Left lung (tissue), 14 donors: ENCODE measurements at regions of chr4 and their contacts with region 1.

Region 1: GRCh38 chr4:2934813-2935761 is 28.1 kb downstream of the NOP14 start:
- DNase-seq: peak; percentile 91 to 98 (median 96)
- ATAC-seq: peak; percentile 60
- H3K4me3 ChIP-seq: peak overlapping the region; percentile 70 to 97
- H3K27ac ChIP-seq: peak overlapping the region; percentile 88 to 90
- H3K4me1 ChIP-seq: peaks cover 30 to 70% of the 10 kb centered on the region in 2 donors
- H3K27me3 ChIP-seq: no peaks in the 10 kb centered on the region
- CTCF ChIP-seq: no peak

Region 2: GRCh38 chr4:2761035-2761923 is 173.8 kb before region 1 on chr4:
- intact Hi-C with region 1: loop called in 1 of 2 experiments (anchors 10 kb)
- DNase-seq: peak in 3 of 4 donors; percentile 39 to 80 (median 50)
- ATAC-seq: peak; percentile 62
- H3K4me3 ChIP-seq: no peak overlapping the region
- H3K27ac ChIP-seq: no peak overlapping the region
- H3K4me1 ChIP-seq: peaks cover 0 to 25% of the 10 kb centered on the region in 2 donors
- H3K27me3 ChIP-seq: no peaks in the 10 kb centered on the region
- CTCF ChIP-seq: no peak